Mammary epithelial cell (primary cell): ENCODE measurements at regions of chr15 and their contacts with region 1.

Region 1: DNA sequence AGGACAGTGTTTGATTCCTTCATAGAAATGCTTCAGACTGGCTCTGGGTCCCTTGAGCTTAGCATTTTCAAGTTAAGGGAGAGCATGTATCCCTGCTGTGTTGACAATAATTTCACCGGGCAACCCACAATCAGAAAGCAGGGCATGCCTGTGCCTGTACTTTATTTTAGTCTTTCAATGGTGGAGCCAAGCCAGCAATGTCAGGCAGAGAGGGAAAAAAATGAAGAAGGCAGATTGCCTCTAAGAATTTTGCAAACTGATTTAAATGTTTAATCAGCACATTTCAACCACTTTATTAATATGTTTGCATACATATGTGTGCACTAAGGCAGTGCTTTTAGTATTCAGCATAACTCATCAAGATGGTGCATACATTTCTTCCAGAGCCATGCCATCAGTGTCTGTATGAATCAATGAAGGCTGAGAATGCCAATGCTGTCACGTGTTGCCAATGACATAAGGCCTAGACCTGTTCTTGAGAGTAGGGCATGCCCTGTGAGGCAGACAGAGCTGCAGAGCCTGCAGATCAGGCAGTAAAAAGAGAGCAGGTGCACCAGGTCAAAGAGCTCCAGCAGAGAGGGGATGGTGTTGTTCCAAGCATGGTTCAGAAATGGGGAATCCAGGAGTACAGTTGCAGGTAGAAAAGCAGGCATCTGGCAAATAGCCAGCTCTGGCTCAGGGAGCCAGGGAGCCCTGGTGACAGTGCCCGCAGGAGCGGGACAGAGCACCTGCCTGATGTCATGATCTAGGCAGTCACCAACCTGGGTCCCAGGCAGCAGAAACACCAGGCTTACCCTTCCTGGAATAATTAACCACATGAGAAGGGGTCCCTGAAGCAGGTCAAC is 508.5 kb downstream of the GABRG3 start:
- DNase-seq: no peak
- H3K4me3 ChIP-seq: no peak overlapping the region
- H3K27ac ChIP-seq: no peak overlapping the region
- H3K4me1 ChIP-seq: no peaks in the 10 kb centered on the region
- H3K27me3 ChIP-seq: no peaks in the 10 kb centered on the region
- CTCF ChIP-seq: no peak

Region 2: GRCh38 chr15:27454281-27455075 is 25.0 kb before region 1 on chr15:
- CTCF ChIA-PET with region 1: no interaction called
- dilution Hi-C with region 1: no loop called
- in situ Hi-C with region 1: no loop called
- intact Hi-C with region 1: loop called (anchors 2 kb)
- DNase-seq: peak; percentile 37
- H3K4me3 ChIP-seq: no peak overlapping the region
- H3K27ac ChIP-seq: peak overlapping the region; percentile 23
- H3K4me1 ChIP-seq: peaks cover 5% of the 10 kb centered on the region
- H3K27me3 ChIP-seq: no peaks in the 10 kb centered on the region
- CTCF ChIP-seq: no peak

Region 3: DNA sequence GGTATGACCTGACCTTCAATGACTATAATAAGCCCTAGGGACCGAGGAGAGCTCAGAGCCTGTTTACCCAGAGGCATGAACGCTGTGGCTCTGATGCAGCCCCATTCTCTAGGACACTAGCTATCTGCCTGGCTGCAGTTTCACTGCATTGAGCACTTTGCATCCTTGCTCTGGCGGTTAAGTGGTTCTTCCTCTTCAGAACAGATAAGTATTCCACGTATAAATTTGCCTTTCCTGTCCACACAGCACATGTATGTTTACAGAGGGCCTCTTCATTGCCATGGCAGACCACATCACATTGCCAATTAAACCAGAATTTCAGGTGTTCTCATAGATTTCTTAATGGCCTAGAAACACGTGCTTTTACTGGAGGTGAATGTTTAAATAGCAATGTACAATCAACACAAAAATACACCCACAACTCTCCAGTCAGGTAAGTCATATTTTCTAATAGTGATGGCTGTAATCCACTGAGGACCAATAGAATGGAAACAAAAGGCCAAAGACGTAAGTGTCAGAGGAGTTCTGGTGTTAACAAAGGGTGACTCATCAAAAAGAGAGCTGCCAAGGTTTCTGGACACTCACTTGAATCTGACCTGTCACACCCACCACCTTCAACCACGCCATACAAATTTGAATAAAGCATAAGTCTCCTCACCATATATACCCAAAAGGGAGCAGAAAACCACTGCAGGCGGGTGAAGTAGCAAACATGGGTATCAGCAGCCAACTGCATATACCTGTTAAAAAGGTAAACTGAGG is 66.2 kb after region 1 on chr15:
- CTCF ChIA-PET with region 1: no interaction called
- dilution Hi-C with region 1: no loop called
- in situ Hi-C with region 1: no loop called
- intact Hi-C with region 1: no loop called
- DNase-seq: no peak
- H3K4me3 ChIP-seq: no peak overlapping the region
- H3K27ac ChIP-seq: no peak overlapping the region
- H3K4me1 ChIP-seq: no peaks in the 10 kb centered on the region
- H3K27me3 ChIP-seq: no peaks in the 10 kb centered on the region
- CTCF ChIP-seq: no peak